H1 (cell line): ENCODE measurements at regions of chr16 and their contacts with region 1.

Region 1: GRCh38 chr16:71537643-71538042 is 11.4 kb downstream of the CHST4 start:
- DNase-seq: peak in 1 of 2 experiments; percentile 76
- H3K4me3 ChIP-seq: no peak overlapping the region
- H3K27ac ChIP-seq: no peak overlapping the region
- H3K4me1 ChIP-seq: no peaks in the 10 kb centered on the region
- H3K27me3 ChIP-seq: no peaks in the 10 kb centered on the region
- CTCF ChIP-seq: peak; percentile 45 to 89 (median 84)
- EP300 ChIP-seq: no peak
- POLR2A ChIP-seq: no peak
- RAD21 ChIP-seq: peak; percentile 87 to 91

Region 2: GRCh38 chr16:71288890-71289733 is 248.5 kb before region 1 on chr16 and contains the start of gene CMTR2:
- CTCF ChIA-PET with region 1: no interaction called
- POLR2A ChIA-PET with region 1: no interaction called
- DNase-seq: peak; percentile 96 to 97
- H3K4me3 ChIP-seq: peak within 1 kb of the TSS; percentile 54 to 81 (median 70)
- H3K27ac ChIP-seq: peak within 1 kb of the TSS; percentile 82
- H3K4me1 ChIP-seq: peaks cover 0 to 7% (median 2%) of the 10 kb centered on the region in 4 experiments; a peak in 4 of 7 replicates
- H3K27me3 ChIP-seq: no peaks in the 10 kb centered on the region
- CTCF ChIP-seq: no peak
- EP300 ChIP-seq: no peak
- POLR2A ChIP-seq: peak in 1 of 2 experiments; percentile 95; a peak in 2 of 3 replicates
- RAD21 ChIP-seq: peak; percentile 8 to 31; a peak in 2 of 4 replicates
- total RNA-seq, gene CMTR2: 11.4 and 12.8 TPM in 2 replicates

Region 3: DNA sequence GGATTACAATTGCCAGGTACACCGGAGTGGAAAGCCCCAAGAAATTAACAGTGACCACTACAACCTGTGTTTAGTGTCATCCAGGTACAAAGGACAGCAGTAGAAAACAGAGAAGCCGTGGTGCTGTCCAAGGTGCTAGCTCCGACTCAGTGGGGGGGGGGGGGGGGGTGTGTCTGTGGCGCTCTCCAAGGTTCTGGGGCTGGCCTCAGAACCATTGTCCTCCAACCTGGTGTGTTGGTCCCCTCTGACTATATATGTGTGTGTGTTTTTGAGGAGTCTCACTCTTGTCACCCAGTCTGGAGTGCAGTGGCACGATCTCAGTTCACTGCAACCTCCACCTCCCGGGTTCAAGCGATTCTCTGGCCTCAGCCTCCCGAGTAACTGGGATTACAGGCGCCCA is 69.8 kb before region 1 on chr16:
- CTCF ChIA-PET with region 1: interaction called, 21 read pairs
- POLR2A ChIA-PET with region 1: no interaction called
- DNase-seq: no peak
- H3K4me3 ChIP-seq: no peak overlapping the region
- H3K27ac ChIP-seq: no peak overlapping the region
- H3K4me1 ChIP-seq: no peaks in the 10 kb centered on the region
- H3K27me3 ChIP-seq: no peaks in the 10 kb centered on the region
- CTCF ChIP-seq: no peak
- EP300 ChIP-seq: 0 out of 3 replicates have a peak, but pooled peaks of 1 of the 2 experiments have one; percentile 14
- POLR2A ChIP-seq: no peak
- RAD21 ChIP-seq: no peak

Region 4: DNA sequence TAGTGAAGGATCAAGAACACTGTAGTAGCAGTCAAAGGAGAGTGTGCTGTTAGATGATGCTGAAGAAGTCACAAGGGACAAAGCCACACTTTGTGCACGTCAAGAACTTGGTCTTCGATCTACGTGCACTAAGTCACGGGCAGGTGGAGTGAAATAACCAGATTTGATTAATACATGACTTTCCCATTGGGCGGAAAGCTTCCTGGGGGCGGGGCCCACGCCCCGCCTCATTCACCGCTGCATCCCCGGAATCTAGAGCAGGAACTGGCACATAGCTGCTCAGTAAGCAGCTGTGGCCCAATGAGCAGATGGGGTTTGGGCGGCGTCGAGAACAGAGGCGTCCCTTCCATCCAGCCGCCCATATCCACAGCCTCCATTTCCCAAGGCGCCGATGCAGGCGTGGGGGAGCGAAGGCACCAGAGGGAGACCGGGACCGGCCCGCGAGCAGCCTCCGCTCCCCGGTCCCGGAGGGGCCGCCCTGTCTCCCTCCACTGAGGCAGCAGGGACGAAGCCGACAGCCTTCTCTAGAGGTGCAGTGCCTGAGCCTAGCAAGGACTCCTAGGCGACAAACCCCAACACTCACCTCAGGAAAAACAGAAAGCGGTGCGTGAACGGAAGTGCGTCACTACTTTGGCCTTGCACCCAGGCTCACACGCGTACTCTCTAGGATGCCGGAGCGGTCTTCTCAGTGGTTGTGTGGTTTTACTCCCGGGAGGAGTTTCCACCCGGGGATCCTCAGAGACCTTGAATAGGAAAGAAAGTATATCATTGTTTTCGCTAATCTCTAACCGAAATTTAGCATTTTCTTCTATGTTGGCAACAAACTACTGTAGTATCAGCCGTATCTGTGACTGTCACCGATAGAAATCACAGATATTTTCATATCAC is 53.4 kb before region 1 on chr16:
- CTCF ChIA-PET with region 1: interaction called, 41 read pairs
- POLR2A ChIA-PET with region 1: interaction called, 4 read pairs
- DNase-seq: peak in 1 of 2 experiments; percentile 78
- H3K4me3 ChIP-seq: peak overlapping the region; percentile 53 to 82 (median 80)
- H3K27ac ChIP-seq: peak overlapping the region; percentile 97
- H3K4me1 ChIP-seq: no peaks in the 10 kb centered on the region
- H3K27me3 ChIP-seq: no peaks in the 10 kb centered on the region
- CTCF ChIP-seq: no peak
- EP300 ChIP-seq: no peak
- POLR2A ChIP-seq: peak; percentile 77 to 97
- RAD21 ChIP-seq: no peak; a peak in 1 of 4 replicates

Region 5: GRCh38 chr16:71526111-71526631 is 11.5 kb before region 1 on chr16 and contains the start of gene CHST4:
- CTCF ChIA-PET with region 1: interaction called, 51 read pairs
- POLR2A ChIA-PET with region 1: interaction called, 19 read pairs
- DNase-seq: peak; percentile 66 to 82
- H3K4me3 ChIP-seq: peak within 1 kb of the TSS; percentile 25 to 60 (median 44)
- H3K27ac ChIP-seq: peak within 1 kb of the TSS; percentile 89
- H3K4me1 ChIP-seq: peaks cover 0 to 18% (median 13%) of the 10 kb centered on the region in 4 experiments; a peak in 4 of 7 replicates
- H3K27me3 ChIP-seq: no peaks in the 10 kb centered on the region
- CTCF ChIP-seq: no peak
- EP300 ChIP-seq: no peak
- POLR2A ChIP-seq: peak; percentile 68 to 92
- RAD21 ChIP-seq: no peak
- total RNA-seq, gene CHST4: 11.7 and 12.1 TPM in 2 replicates

Region 6: DNA sequence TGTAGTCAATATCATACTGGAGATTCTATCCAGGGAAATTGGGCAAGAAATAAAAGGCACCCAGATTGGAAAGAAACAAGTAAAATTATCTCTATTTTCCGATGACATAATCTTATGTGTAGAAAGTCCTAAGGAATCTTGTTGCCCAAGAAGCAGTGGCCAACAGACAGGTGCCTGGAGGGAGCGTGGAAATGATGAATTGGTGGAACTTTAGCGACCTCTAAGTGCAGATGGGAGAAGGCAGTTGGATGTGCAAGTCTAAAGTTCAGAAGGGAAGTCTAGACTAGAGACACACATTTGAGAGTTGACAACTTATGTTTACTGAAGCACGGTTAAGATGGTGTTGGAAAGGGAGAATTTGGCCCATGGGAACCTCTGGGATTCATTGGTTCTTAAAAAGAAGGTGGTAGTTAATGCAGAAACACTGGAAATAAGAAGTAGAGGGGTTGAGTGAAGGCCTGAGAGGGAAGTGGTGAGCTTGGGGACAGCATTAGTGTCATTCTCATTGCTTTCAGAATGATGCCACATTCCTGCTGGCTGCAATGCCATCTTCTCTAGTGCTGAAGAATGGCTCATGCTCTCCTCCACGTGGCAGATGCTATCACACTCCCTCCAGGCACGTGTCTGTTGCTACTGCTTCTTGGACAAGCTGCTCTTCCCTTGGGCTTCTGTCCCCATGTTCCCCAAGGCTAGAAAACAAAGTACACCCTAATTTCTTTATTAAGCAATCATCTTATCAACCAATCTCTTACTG is 15.2 kb after region 1 on chr16:
- CTCF ChIA-PET with region 1: interaction called, 29 read pairs
- POLR2A ChIA-PET with region 1: no interaction called
- DNase-seq: no peak
- H3K4me3 ChIP-seq: no peak overlapping the region
- H3K27ac ChIP-seq: no peak overlapping the region
- H3K4me1 ChIP-seq: no peaks in the 10 kb centered on the region
- H3K27me3 ChIP-seq: no peaks in the 10 kb centered on the region
- CTCF ChIP-seq: peak; percentile 5 to 64 (median 57)
- EP300 ChIP-seq: no peak
- POLR2A ChIP-seq: no peak
- RAD21 ChIP-seq: peak; percentile 62 to 72

Region 7: GRCh38 chr16:71734511-71734910 is 196.9 kb after region 1 on chr16:
- CTCF ChIA-PET with region 1: no interaction called
- POLR2A ChIA-PET with region 1: no interaction called
- DNase-seq: no peak
- H3K4me3 ChIP-seq: no peak overlapping the region
- H3K27ac ChIP-seq: no peak overlapping the region
- H3K4me1 ChIP-seq: no peaks in the 10 kb centered on the region; a peak in 1 of 7 replicates
- H3K27me3 ChIP-seq: no peaks in the 10 kb centered on the region
- CTCF ChIP-seq: no peak
- EP300 ChIP-seq: no peak
- POLR2A ChIP-seq: no peak
- RAD21 ChIP-seq: no peak